ENCODE measurements at regions of chr12 and their contacts with region 1.

Region 1: DNA sequence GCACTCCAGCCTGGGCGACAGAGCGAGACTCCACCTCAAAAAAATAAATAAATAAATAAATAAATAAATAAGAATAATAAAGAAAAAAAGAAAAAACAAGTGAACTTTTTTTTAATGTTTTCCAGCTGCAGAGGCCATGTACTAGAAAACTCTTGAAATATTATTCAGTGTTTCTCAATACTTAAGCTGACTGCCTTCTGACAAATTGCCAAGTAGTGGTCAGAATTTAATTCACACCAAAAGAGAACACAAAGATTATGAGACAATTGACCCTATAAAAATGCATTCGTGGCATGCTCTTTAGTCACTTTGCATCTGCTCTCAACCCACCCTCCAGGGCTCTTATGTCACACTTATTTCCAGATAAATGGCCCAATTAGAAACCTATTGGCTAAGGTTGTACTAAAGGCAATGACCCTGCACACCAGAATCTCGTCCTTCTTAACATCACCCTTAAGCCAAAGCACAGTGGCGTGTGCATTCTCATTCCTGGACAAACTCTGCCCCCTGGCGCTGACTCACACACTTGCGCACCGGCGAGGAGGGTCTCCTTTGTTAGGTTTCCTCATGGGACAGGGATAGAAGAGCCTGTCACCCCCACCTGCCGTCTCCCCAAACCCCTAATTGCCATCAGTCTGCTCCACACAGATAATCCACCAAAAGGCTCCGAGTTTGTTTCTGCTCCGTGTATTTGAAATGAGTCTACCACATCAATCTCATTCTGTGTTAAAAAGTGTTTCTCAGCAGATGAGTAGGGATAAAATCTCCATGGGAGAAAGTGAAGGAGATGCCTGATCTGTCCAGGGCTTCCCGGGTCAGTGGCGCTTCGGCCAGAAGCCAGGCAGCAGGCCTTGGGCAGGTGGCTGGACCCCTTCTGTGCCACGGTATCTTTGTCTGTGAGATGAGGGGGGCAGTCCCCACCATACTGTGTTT is 73.1 kb upstream of the CEP83 start:
- DNase-seq: peak; percentile 57 to 81 (median 62)
- ATAC-seq: peak; percentile 74 to 92 (median 86)
- H3K4me3 ChIP-seq: no peak overlapping the region
- H3K27ac ChIP-seq: no peak overlapping the region
- H3K4me1 ChIP-seq: no peaks in the 10 kb centered on the region
- H3K27me3 ChIP-seq: no peaks in the 10 kb centered on the region
- CTCF ChIP-seq: peak; percentile 61 to 85 (median 78)
- POLR2A ChIP-seq: no peak

Region 2: DNA sequence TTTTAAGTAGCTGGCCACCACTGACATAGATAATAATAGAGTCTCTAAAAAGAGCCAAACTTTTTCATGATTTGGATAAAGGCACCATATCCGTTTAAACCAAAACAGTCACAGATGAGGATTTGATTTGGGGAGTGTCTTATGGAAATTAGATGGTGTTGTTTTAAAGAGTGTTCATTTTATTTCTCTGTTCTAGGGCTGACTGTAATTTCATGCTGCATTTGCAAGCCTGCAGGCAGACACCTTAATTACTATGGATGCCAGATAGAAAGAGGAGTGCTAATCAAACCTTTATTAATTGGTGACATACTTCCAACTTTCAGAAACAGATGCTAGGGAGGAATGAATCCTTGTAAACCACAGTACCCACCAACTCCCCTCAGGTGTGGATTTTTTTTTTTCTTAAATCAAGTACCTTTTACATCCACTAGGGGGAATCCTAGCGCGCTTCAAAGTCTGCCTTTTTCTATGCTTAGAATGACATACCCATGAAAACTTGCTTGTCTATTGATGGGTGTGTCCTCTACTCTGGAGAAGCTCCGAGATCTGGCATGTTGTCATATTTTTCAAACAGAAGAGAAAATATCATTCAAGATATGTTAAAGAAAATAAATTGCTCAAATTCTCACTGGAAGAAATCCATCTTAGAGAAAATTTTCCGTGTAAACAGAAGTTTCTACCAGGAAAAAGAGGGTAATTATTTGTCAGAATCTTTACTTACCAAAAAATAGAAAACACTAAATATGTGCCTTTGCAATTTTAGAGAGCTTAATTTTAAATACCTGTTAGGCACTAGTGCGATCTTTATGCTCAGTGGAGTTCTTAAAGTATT is 398.6 kb before region 1 on chr12:
- intact Hi-C with region 1: loop called in 6 of 10 experiments (anchors 1 to 2 kb)
- DNase-seq: no peak
- ATAC-seq: peak; percentile 32 to 81 (median 74)
- H3K4me3 ChIP-seq: no peak overlapping the region
- H3K27ac ChIP-seq: no peak overlapping the region
- H3K4me1 ChIP-seq: peaks cover 0 to 2% (median 0%) of the 10 kb centered on the region in 12 donors
- H3K27me3 ChIP-seq: peaks cover 0 to 4% (median 0%) of the 10 kb centered on the region in 9 donors
- CTCF ChIP-seq: peak; percentile 70 to 90 (median 82)
- POLR2A ChIP-seq: no peak

Region 3: DNA sequence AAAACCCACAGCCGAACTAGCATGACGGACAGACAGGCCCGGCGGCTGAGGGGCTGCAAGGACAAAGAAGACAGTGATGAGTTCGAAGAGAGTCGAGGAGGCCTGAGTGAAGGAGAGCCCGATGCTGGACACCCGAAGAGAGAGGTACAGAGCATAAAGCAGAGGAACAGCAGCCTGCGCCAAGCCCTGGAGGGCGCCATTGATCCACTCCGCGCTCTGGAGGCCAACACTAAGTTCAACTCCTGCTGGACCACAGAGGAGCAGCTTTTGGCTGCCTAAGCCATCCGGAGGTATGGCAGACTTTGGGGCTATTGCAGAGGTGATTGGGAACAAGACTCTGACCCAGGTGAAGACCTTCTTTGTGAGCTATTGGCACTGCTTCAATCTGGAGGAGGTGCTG is 392.2 kb before region 1 on chr12:
- intact Hi-C with region 1: loop called in 8 of 10 experiments (anchors 2 to 5 kb)
- DNase-seq: peak in 1 of 5 donors; percentile 30
- ATAC-seq: peak in 1 of 4 donors; percentile 44
- H3K4me3 ChIP-seq: no peak overlapping the region
- H3K27ac ChIP-seq: no peak overlapping the region
- H3K4me1 ChIP-seq: peaks cover 0 to 3% (median 0%) of the 10 kb centered on the region in 12 donors
- H3K27me3 ChIP-seq: no peaks in the 10 kb centered on the region
- CTCF ChIP-seq: peak in 3 of 12 donors; percentile 7 to 23 (median 11)
- POLR2A ChIP-seq: no peak

Region 4: DNA sequence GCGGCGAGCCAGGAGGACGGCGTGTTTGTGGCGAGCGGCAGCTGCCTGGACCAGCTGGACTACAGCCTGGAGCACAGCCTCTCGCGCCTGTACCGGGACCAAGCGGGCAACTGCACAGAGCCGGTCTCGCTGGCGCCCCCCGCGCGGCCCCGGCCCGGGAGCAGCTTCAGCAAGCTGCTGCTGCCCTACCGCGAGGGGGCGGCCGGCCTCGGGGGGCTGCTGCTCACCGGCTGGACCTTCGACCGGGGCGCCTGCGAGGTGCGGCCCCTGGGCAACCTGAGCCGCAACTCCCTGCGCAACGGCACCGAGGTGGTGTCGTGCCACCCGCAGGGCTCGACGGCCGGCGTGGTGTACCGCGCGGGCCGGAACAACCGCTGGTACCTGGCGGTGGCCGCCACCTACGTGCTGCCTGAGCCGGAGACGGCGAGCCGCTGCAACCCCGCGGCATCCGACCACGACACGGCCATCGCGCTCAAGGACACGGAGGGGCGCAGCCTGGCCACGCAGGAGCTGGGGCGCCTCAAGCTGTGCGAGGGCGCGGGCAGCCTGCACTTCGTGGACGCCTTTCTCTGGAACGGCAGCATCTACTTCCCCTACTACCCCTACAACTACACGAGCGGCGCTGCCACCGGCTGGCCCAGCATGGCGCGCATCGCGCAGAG is 383.5 kb before region 1 on chr12:
- intact Hi-C with region 1: loop called in 6 of 10 experiments (anchors 2 to 5 kb)
- DNase-seq: peak in 4 of 5 donors; percentile 35 to 79 (median 56)
- ATAC-seq: peak in 3 of 4 donors; percentile 29 to 58 (median 50)
- H3K4me3 ChIP-seq: peak overlapping the region; percentile 42 to 80 (median 66)
- H3K27ac ChIP-seq: peak overlapping the region in 3 of 12 donors; percentile 13 to 70 (median 28)
- H3K4me1 ChIP-seq: peaks cover 0 to 51% (median 12%) of the 10 kb centered on the region in 12 donors
- H3K27me3 ChIP-seq: peaks cover 0 to 18% (median 2%) of the 10 kb centered on the region in 9 donors
- CTCF ChIP-seq: peak in 9 of 12 donors; percentile 16 to 51 (median 27)
- POLR2A ChIP-seq: no peak

Region 5: DNA sequence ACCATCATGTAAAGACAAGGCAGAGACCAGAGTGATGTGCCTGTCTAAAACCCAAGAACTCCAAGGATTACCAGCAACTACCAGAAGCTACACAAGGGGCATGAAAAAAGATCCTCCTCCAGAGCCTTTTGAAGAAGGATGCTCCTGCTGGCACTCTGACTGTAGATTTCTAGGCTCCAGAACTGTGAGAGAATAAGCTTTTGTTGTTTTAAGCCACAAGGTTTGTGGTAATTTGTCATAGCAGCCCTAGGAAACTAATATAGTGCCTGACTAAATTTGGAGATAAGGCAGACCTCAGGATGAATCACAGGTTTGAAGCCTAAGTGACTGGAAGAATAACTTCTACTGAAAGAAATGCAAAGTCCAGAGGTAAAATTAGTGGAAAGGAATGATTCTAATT is 206.0 kb before region 1 on chr12:
- intact Hi-C with region 1: loop called in 6 of 10 experiments (anchors 5 to 10 kb)
- DNase-seq: no peak
- ATAC-seq: no peak
- H3K4me3 ChIP-seq: no peak overlapping the region
- H3K27ac ChIP-seq: no peak overlapping the region
- H3K4me1 ChIP-seq: peaks cover 0 to 2% (median 0%) of the 10 kb centered on the region in 12 donors
- H3K27me3 ChIP-seq: no peaks in the 10 kb centered on the region
- CTCF ChIP-seq: no peak
- POLR2A ChIP-seq: no peak

Region 6: GRCh38 chr12:94435511-94435927 is 97.2 kb before region 1 on chr12:
- intact Hi-C with region 1: no loop called
- DNase-seq: no peak
- ATAC-seq: peak in 3 of 4 donors; percentile 33 to 42 (median 39)
- H3K4me3 ChIP-seq: peak overlapping the region in 2 of 12 donors; percentile 11 to 18
- H3K27ac ChIP-seq: no peak overlapping the region
- H3K4me1 ChIP-seq: peaks cover 0 to 16% (median 6%) of the 10 kb centered on the region in 12 donors
- H3K27me3 ChIP-seq: no peaks in the 10 kb centered on the region
- CTCF ChIP-seq: no peak
- POLR2A ChIP-seq: no peak

Measured in heart left ventricle (tissue), 16 donors.